ENCODE measurements at regions of chr22 and their contacts with region 1.

Region 1: DNA sequence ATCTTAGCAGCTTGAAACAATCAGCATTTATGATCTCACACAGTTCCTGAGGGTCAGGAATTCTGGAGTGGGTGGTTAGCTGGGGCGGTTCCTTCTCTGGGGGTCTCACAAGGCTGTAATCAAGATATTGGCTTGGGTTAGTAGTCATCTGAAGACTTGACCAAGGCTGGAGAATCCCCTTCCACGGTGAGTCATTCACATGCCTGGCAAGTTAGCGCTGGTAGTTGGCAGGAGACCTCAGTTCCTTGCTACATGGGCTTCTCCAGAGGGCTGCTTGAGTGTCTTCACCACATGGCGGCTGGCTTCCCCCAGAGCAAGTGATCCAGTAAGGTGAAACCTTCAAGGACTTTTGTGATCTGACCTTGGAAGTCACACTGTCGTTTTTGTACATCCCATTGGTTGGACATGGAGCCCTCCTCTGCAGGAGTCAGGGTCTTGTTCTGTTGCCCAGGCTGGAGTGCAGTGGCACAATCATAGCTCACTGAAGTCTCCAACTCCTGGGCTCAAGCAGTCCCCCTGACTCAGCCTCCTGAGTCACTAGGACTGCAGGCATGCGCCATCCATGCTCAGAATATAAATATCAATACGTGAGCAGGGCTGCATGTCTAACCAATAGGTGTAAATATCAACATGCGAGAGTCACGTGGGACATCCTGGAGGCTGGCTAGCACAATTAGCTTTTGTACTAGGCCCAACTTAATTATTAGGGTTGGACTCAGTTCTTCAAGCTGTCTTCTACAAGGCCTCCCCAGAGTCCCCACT is 7.2 kb upstream of the NIPSNAP1 start:
- DNase-seq: no peak
- H3K4me3 Mint-ChIP-seq: no peak overlapping the region
- H3K27ac Mint-ChIP-seq: no peak overlapping the region
- H3K4me1 Mint-ChIP-seq: peaks cover 10% of the 10 kb centered on the region
- H3K27me3 Mint-ChIP-seq: no peaks in the 10 kb centered on the region

Region 2: GRCh38 chr22:30089655-30089974 is 501.5 kb after region 1 on chr22:
- intact Hi-C with region 1: loop called (anchors 2 kb)
- DNase-seq: no peak
- H3K4me3 Mint-ChIP-seq: no peak overlapping the region
- H3K27ac Mint-ChIP-seq: peak overlapping the region; percentile 2
- H3K4me1 Mint-ChIP-seq: peaks cover 48% of the 10 kb centered on the region
- H3K27me3 Mint-ChIP-seq: no peaks in the 10 kb centered on the region

Measured in activated T-helper 2 cell treated with anti-CD3 and anti-CD28 coated beads, Interferon-gamma antibody, Interleukin-2, Interleukin-4, amounts not matched to agents 10 μg/mL and 5 μg/mL and 100 μg/mL, durations not matched to agents 14 hours and 24 hours and 36 hours (primary cell).